H1 (cell line): ENCODE measurements at regions of chr2 and their contacts with region 1.

Region 1: DNA sequence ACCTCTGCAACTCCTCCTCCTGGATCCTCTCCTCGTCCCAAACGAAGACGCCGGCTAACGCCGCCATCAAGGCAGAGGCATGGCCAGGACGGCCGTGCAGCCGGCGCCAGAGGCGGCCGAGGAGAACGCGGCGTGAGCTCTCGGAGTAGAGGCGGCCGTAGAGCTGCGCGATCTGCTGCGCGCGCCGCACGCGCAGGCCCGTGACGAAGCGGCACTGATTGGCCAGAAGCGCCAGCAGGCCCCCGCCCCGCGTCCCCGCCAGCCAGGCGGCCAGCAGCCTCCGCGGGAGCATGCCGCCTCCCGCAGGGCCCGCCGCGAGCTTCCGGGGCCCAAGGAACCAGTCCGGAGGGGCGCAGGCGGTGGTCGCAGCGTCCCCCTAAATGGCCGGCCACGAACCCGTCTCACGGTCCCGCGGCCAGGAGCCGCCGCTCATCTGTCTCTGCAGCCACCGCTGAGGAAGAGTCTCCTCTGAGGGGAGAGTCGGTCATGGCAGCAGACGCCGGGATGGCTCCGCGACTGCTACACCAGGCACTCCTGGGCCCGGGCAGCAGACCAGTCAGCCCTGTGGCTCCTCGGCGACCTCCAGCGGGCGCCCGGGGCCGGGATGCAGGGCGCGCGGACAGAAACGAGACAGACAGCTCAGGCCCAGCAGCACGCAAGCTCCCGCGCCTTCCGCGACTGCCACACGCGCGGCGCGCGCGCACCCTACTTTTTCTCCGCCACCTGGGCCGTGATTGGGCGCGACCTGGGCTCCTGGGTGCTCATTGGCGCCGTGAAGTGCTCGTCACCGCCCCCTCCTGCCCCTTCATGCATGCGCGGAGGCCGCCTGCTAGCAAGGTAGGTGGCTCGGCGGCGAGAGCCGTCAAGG is at the start of gene STARD7:
- DNase-seq: peak; percentile 93 to 98
- H3K4me3 ChIP-seq: peak within 1 kb of the TSS; percentile 60 to 93 (median 76)
- H3K27ac ChIP-seq: peak within 1 kb of the TSS; percentile 87
- H3K4me1 ChIP-seq: peaks cover 4 to 7% (median 5%) of the 10 kb centered on the region in 4 experiments; a peak in 5 of 7 replicates
- H3K27me3 ChIP-seq: no peaks in the 10 kb centered on the region
- CTCF ChIP-seq: peak in 1 of 3 experiments; percentile 5; a peak in 1 of 4 replicates
- EP300 ChIP-seq: no peak
- POLR2A ChIP-seq: peak; percentile 84 to 90
- RAD21 ChIP-seq: 0 out of 4 replicates have a peak, but pooled peaks of 1 of the 2 experiments have one; percentile 16
- total RNA-seq, gene STARD7: 200 and 207 TPM in 2 replicates

Region 2: GRCh38 chr2:96188821-96189526 is 19.4 kb before region 1 on chr2:
- CTCF ChIA-PET with region 1: no interaction called
- POLR2A ChIA-PET with region 1: no interaction called
- DNase-seq: no peak
- H3K4me3 ChIP-seq: no peak overlapping the region
- H3K27ac ChIP-seq: no peak overlapping the region
- H3K4me1 ChIP-seq: no peaks in the 10 kb centered on the region
- H3K27me3 ChIP-seq: no peaks in the 10 kb centered on the region
- CTCF ChIP-seq: no peak
- EP300 ChIP-seq: no peak
- POLR2A ChIP-seq: no peak
- RAD21 ChIP-seq: no peak

Region 3: DNA sequence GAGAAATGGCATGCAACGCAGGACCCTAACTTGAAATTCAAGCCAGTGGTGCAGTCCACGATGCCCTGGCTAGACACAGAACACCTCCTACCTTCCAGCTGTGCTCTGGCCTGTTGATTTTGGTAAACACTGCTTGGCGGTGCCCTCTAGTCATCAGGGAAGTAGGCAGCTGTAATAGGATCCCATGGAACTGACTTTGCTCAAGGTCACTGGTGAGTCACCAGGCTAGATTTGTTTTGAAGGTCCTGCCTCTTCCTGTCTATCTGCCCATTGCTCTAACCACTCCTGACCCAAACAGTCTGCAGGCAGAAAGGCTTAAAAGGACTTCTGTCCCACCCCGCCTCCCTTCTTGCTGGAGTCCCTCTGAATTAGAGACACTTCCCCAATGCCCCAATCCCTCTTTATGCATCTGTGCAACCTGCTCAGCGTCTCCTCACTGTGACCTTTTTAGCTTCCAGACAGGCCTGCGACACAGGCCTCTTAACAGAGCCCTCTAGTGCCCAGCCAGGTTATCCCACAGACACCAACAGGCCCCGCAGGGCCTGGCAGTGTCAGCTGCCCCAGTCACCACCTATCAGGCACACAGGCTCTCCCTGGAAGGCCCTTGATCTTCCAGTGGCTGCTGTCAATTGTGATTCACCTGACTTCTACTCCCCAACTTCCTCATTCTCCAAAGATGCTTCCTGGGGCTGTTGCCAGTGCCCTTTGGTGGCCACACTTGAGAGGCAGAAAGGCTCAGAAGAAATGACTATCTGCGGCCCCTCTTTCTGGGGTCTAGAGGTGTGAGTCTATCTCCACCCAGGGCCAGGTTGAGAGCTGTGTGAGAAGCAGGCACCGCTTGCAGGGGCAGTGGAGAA is 52.3 kb after region 1 on chr2:
- CTCF ChIA-PET with region 1: interaction called, 8 read pairs
- POLR2A ChIA-PET with region 1: interaction called, 13 read pairs
- DNase-seq: peak in 1 of 2 experiments; percentile 57
- H3K4me3 ChIP-seq: no peak overlapping the region
- H3K27ac ChIP-seq: no peak overlapping the region
- H3K4me1 ChIP-seq: peaks cover 0 to 9% (median 3%) of the 10 kb centered on the region in 4 experiments; a peak in 4 of 7 replicates
- H3K27me3 ChIP-seq: no peaks in the 10 kb centered on the region
- CTCF ChIP-seq: peak; percentile 38 to 64 (median 57)
- EP300 ChIP-seq: no peak
- POLR2A ChIP-seq: no peak
- RAD21 ChIP-seq: peak; percentile 40 to 63